G401 (cell line): ENCODE measurements at regions of chr2 and their contacts with region 1.

Region 1: DNA sequence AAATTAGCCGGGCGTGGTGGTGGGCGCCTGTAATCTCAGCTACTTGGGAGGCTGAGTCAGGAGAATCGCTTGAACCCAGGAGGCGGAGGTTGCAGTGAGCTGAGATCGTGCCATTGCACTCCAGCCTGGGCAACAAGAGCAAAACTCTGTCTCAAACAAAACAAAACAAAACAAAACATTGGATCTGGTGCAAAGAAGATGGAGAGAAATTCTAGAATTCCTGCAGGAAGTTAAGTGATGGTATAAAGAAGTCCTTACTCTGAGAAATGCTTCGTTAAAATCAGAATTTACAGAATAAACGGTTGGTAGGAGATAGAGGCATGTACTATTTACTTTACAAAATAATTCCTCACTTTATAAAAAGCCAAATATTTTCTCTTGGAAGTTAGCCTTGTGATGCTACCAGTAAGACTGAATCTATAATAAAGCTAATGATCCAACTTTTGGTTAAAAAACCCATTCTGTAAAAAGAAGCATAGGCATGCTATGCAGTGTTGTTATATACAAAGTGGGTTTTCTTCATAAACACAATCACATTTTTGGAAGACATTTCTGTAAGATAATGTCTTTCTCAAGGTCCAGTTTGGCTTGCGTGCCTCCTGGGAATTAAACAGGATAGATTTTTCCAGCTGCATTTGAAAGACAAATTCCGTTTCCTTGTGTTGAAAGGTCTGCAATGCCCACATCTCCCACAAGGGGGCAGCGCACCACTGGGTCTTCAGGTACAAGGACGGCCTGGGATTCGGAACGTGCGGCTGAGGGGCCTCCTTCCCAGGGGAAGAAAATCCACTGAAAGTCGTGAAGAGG is 35.6 kb upstream of the PNO1 start:
- DNase-seq: peak; percentile 84

Region 2: DNA sequence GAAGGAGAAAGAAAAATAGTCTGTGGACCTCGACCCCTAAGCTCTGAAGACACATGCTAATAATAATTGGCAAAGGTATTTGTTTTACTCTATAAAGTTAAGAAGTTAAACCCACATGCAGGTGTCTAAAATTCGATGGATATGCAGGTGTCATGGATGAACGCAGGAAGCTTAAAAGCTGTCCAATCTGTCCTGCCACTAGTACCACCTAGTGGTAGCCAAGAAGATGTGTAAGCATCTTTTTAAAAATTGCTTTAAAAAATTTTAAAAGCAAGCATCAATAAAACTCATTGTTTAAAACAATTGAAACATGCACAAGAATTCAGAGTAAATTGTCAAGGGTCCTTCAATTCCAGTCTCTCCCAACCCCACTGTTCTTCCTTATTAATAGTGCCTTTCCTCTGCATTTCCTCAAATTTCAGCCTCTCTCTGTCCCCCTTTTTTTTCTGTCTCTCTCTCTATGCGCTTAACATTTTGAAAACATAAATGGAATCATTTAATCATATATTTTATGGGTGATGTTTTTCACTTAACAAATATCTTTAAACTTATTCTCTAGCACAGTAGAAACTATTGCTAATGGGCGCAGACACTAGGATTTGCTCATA is 160.8 kb after region 1 on chr2:
- in situ Hi-C with region 1: loop called (anchors 10 kb)
- DNase-seq: peak; percentile 70